Motor neuron (in vitro differentiated cells): ENCODE measurements at regions of chr12 and their contacts with region 1.

Region 1: GRCh38 chr12:94560431-94561221 is 89.7 kb downstream of the TMCC3 start:
- ATAC-seq: peak; percentile 85 to 97 (median 93)
- H3K4me3 ChIP-seq: no peak overlapping the region
- H3K27ac ChIP-seq: no peak overlapping the region
- H3K4me1 ChIP-seq: peaks cover 0 to 9% of the 10 kb centered on the region in 2 donors

Region 2: GRCh38 chr12:93593843-93594242 is 966.8 kb before region 1 on chr12:
- in situ Hi-C with region 1: no loop called
- ATAC-seq: no peak
- H3K4me3 ChIP-seq: no peak overlapping the region
- H3K27ac ChIP-seq: no peak overlapping the region
- H3K4me1 ChIP-seq: no peaks in the 10 kb centered on the region

Region 3: GRCh38 chr12:94725375-94726168 is 164.9 kb after region 1 on chr12:
- in situ Hi-C with region 1: loop called in 1 of 9 experiments (anchors 25 kb)
- ATAC-seq: peak in 3 of 8 experiments; percentile 40 to 84 (median 62)
- H3K4me3 ChIP-seq: no peak overlapping the region
- H3K27ac ChIP-seq: no peak overlapping the region
- H3K4me1 ChIP-seq: peaks cover 3% of the 10 kb centered on the region in 2 donors